Uterus (tissue), 4 donors: ENCODE measurements at regions of chr6 and their contacts with region 1.

Region 1: GRCh38 chr6:144215932-144216667 is 65.8 kb downstream of the STX11 start:
- DNase-seq: peak; percentile 96 to 97
- H3K4me3 ChIP-seq: peak overlapping the region; percentile 57 to 60
- H3K27ac ChIP-seq: peak overlapping the region; percentile 94 to 98
- H3K4me1 ChIP-seq: peaks cover 0 to 4% of the 10 kb centered on the region in 2 donors
- H3K27me3 ChIP-seq: no peaks in the 10 kb centered on the region
- CTCF ChIP-seq: peak; percentile 50 to 92 (median 72)
- POLR2A ChIP-seq: peak; percentile 42 to 47

Region 2: DNA sequence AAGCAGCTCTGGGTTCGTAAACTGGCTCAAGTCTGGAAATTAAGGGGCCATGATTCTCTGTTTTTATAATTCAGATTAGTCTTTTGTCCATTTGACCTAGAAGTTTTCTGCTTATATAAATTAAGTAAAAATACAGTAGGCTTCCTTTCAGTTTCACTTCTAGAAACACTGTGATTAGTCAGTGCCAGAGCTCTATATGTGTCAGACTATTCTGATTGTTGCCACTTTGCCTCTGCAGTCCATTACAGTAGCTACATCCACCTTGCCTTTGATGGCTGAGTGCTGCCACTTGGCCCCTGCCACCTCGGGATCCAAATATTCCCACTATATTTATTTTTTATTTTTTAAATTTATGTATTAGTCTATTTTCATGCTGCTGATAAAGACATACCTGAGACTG is 343.9 kb before region 1 on chr6:
- intact Hi-C with region 1: no loop called
- DNase-seq: no peak
- H3K4me3 ChIP-seq: no peak overlapping the region
- H3K27ac ChIP-seq: no peak overlapping the region
- H3K4me1 ChIP-seq: no peaks in the 10 kb centered on the region
- H3K27me3 ChIP-seq: no peaks in the 10 kb centered on the region
- CTCF ChIP-seq: no peak
- POLR2A ChIP-seq: no peak

Region 3: GRCh38 chr6:144104898-144105487 is 111.1 kb before region 1 on chr6:
- intact Hi-C with region 1: loop called (anchors 5 kb)
- DNase-seq: no peak
- H3K4me3 ChIP-seq: no peak overlapping the region
- H3K27ac ChIP-seq: no peak overlapping the region
- H3K4me1 ChIP-seq: no peaks in the 10 kb centered on the region
- H3K27me3 ChIP-seq: no peaks in the 10 kb centered on the region
- CTCF ChIP-seq: peak; percentile 59 to 80 (median 68)
- POLR2A ChIP-seq: no peak

Region 4: DNA sequence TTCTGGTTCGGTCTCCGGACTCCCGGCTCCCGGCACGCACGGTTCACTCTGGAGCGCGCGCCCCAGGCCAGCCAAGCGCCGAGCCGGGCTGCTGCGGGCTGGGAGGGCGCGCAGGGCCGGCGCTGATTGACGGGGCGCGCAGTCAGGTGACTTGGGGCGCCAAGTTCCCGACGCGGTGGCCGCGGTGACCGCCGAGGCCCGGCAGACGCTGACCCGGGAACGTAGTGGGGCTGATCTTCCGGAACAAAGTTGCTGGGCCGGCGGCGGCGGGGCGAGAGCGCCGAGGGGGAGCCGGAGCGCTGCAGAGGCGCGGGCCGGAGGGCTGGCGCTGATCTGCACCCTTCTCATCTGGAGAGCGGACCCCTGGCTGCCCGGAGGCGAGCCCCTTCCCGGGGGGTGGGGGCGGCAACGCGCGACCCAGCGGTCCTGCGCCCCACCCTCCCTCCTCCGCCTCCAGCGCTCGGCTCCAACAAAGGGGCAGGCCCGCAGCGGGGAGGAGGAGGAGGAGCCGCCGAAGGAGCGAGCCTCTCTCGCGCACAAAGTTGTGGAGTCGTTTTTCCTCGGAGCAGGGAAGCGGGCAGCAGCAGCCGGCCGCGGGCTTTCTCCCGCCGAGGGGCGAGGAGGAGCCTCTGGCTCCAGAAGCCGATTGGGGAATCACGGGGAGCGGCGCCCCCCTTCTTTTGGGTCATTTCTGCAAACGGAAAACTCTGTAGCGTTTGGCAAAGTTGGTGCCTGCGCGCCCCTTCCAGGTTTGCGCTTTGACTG is 68.9 kb after region 1 on chr6 and contains the start of gene UTRN:
- intact Hi-C with region 1: loop called (anchors 10 kb)
- DNase-seq: peak; percentile 80
- H3K4me3 ChIP-seq: peak within 1 kb of the TSS; percentile 69 to 77
- H3K27ac ChIP-seq: peak within 1 kb of the TSS; percentile 95 to 96
- H3K4me1 ChIP-seq: peaks cover 0 to 14% of the 10 kb centered on the region in 2 donors
- H3K27me3 ChIP-seq: no peaks in the 10 kb centered on the region
- CTCF ChIP-seq: peak in 1 of 4 experiments; percentile 2
- POLR2A ChIP-seq: peak; percentile 36 to 62
- total RNA-seq, gene UTRN: 86.8 to 336 (median 231) TPM

Region 5: DNA sequence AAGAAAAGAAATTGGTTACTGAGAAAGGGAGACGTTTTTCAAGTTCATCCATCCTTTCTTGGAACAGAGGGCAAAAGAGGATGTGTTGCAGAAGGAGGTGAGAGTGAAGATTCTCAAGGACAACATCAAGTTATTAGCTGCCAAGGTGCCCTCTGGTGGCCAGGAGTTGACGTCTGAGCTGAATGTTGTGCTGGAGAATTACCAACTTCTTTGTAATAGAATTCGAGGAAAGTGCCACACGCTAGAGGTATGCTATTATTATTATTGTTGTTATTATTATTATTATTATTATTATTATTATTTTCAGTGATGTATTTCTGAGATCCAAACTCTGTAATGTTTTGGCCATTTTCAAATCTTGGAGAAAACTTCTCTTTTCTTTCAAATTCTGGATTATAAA is 266.0 kb after region 1 on chr6:
- intact Hi-C with region 1: loop called (anchors 5 kb)
- DNase-seq: peak; percentile 74 to 84
- H3K4me3 ChIP-seq: no peak overlapping the region
- H3K27ac ChIP-seq: no peak overlapping the region
- H3K4me1 ChIP-seq: no peaks in the 10 kb centered on the region
- H3K27me3 ChIP-seq: no peaks in the 10 kb centered on the region
- CTCF ChIP-seq: peak; percentile 58 to 76 (median 72)
- POLR2A ChIP-seq: no peak